Panc1 (cell line): ENCODE measurements at regions of chr10 and their contacts with region 1.

Region 1: DNA sequence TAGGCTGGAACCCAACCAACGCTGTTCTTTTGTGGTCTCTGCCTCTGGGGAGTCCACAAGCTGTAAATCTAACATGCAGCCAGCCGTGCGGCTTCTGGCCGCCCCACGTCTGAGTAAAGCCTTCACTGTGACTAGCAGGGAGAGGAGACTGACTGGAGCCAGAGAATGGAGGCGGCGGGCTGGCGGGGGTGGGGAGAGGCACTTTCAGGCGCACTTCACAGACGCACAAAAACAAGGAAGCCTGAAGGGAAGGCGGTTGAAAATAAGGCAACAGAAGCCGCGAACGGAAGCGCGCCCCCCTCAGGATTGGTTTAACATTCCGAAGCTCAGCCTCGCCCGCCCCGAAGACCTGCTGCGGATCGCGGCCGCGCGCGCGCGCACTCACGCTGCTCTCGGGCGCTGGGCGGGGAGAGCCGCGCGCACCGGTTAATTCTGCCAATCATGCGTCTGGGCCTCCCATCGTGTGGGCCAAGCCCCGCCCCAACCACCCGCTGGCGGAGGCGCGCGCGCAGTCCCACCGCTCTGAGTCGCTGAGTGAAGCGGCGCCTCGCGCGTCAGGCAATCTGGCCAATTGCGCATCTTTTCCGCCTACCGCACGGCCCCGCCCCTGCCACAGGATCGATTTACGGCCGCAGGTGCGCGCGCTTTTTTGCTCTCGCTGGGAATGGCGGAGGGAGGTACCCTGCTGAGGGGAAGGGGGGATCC is at the start of gene SFR1:
- DNase-seq: peak; percentile 90
- ATAC-seq: peak; percentile 95
- H3K4me3 ChIP-seq: peak within 1 kb of the TSS; percentile 83 to 89
- H3K27ac ChIP-seq: peak within 1 kb of the TSS; percentile 93
- H3K4me1 ChIP-seq: peaks cover 24% of the 10 kb centered on the region
- H3K27me3 ChIP-seq: no peaks in the 10 kb centered on the region
- CTCF ChIP-seq: peak; percentile 93
- total RNA-seq, gene SFR1: 8.4 TPM

Region 2: DNA sequence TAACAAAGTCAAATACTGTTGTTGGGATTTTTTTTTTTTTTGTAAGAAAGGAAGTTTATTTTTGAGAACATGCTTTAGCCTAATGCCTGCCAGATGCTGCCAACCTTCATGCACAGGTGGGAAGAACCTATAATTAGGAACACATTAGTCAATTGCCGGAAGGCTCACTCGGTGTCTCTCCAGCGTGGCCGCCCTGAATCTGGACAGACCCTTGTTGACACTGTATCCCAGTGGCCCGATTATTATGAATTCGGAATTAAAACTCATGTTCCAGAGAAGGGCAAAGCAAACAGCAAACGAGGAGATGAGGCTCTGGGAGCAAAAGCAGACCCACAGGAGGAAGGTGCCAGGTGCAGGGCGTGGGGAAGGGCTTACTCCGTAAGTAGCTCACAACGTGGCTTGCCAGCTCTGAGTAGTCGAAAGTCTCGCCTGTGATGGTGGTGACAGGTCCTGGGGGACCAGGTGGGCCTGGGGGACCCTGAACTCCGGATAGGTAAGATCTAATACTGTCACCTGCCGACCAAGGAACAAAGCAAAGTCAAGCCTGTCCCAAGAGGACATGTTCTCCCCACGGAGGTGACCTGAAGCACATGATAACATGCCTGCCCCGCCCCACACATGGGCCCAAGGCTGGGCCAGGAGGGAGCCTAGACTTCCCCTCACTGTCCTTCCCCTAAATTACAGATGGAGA is 84.3 kb before region 1 on chr10:
- CTCF ChIA-PET with region 1: interaction called, 3 read pairs
- POLR2A ChIA-PET with region 1: interaction called, 18 read pairs
- in situ Hi-C with region 1: no loop called
- intact Hi-C with region 1: no loop called
- DNase-seq: no peak
- ATAC-seq: no peak
- H3K4me3 ChIP-seq: no peak overlapping the region
- H3K27ac ChIP-seq: no peak overlapping the region
- H3K4me1 ChIP-seq: no peaks in the 10 kb centered on the region
- H3K27me3 ChIP-seq: no peaks in the 10 kb centered on the region
- CTCF ChIP-seq: no peak

Region 3: GRCh38 chr10:104045151-104046089 is 76.3 kb before region 1 on chr10:
- CTCF ChIA-PET with region 1: no interaction called
- POLR2A ChIA-PET with region 1: no interaction called
- in situ Hi-C with region 1: no loop called
- intact Hi-C with region 1: loop called (anchors 5 kb)
- DNase-seq: peak; percentile 50
- ATAC-seq: peak; percentile 92
- H3K4me3 ChIP-seq: no peak overlapping the region
- H3K27ac ChIP-seq: no peak overlapping the region
- H3K4me1 ChIP-seq: peaks cover 5% of the 10 kb centered on the region; the same call in 1 of the 2 replicates
- H3K27me3 ChIP-seq: peaks cover 4% of the 10 kb centered on the region
- CTCF ChIP-seq: peak; percentile 89

Region 4: GRCh38 chr10:104056619-104057273 is 64.9 kb before region 1 on chr10:
- CTCF ChIA-PET with region 1: interaction called, 3 read pairs
- POLR2A ChIA-PET with region 1: interaction called, 19 read pairs
- in situ Hi-C with region 1: no loop called
- intact Hi-C with region 1: no loop called
- DNase-seq: no peak
- ATAC-seq: no peak
- H3K4me3 ChIP-seq: no peak overlapping the region
- H3K27ac ChIP-seq: no peak overlapping the region
- H3K4me1 ChIP-seq: no peaks in the 10 kb centered on the region
- H3K27me3 ChIP-seq: no peaks in the 10 kb centered on the region
- CTCF ChIP-seq: no peak

Region 5: DNA sequence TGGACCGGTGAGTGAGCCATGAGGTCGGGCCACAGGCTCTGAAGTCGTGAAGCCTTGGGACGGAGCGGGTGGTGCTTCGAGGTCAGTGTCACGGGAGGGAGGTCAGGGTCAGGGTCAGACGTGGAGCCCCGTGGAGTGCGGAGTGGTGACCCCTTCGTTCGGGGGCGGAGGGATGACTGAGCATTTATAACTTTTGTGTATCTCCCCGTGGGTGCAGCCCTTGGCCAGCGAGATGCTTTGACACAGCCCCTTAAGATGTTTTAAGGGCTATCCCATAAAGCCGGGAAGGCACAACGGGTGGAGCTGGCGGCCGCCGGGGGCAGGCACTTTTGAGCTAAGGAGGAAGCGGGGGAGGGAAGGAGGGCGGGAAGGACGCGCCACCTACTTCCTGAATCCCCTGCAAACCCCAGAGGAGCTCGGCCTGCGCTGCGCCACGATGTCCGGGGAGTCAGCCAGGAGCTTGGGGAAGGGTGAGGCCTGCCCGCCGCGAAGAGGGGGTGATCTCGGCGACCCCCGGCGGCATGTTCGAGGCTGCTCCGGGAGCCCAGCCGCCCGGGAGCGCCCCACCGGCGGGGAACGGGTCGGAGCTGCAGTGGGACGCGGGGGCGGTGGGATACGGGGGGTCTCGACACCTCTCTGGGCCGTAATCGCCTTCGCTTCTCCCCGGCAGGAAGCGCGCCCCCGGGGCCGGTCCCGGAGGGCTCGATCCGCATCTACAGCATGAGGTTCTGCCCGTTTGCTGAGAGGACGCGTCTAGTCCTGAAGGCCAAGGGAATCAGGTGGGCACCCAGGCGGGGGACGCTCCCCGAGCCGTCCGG is 133.0 kb after region 1 on chr10 and contains the start of gene GSTO1:
- CTCF ChIA-PET with region 1: no interaction called
- POLR2A ChIA-PET with region 1: interaction called, 17 read pairs
- in situ Hi-C with region 1: no loop called
- intact Hi-C with region 1: no loop called
- DNase-seq: no peak
- ATAC-seq: peak; percentile 96
- H3K4me3 ChIP-seq: peak within 1 kb of the TSS; percentile 65 to 71
- H3K27ac ChIP-seq: peak within 1 kb of the TSS; percentile 94
- H3K4me1 ChIP-seq: peaks cover 29% of the 10 kb centered on the region
- H3K27me3 ChIP-seq: no peaks in the 10 kb centered on the region
- CTCF ChIP-seq: no peak
- total RNA-seq, gene GSTO1: 134 TPM